ENCODE measurements at regions of chr1 and their contacts with region 1.

Region 1: GRCh38 chr1:180533266-180533987 is 25.3 kb upstream of the OVAAL start:
- DNase-seq: peak; percentile 59 to 80 (median 74)
- ATAC-seq: peak; percentile 86 to 94 (median 93)
- H3K4me3 ChIP-seq: no peak overlapping the region
- H3K27ac ChIP-seq: no peak overlapping the region
- H3K4me1 ChIP-seq: peaks cover 0 to 6% (median 5%) of the 10 kb centered on the region in 3 donors
- H3K27me3 ChIP-seq: no peaks in the 10 kb centered on the region
- CTCF ChIP-seq: peak; percentile 50 to 77 (median 63)

Region 2: GRCh38 chr1:180623579-180624347 is 90.3 kb after region 1 on chr1:
- intact Hi-C with region 1: loop called in 1 of 3 experiments (anchors 10 kb)
- DNase-seq: no peak
- ATAC-seq: peak in 2 of 4 donors; percentile 66 to 81
- H3K4me3 ChIP-seq: no peak overlapping the region
- H3K27ac ChIP-seq: no peak overlapping the region
- H3K4me1 ChIP-seq: no peaks in the 10 kb centered on the region
- H3K27me3 ChIP-seq: no peaks in the 10 kb centered on the region
- CTCF ChIP-seq: no peak

Region 3: GRCh38 chr1:180643693-180644092 is 110.3 kb after region 1 on chr1:
- intact Hi-C with region 1: loop called in 1 of 3 experiments (anchors 10 kb)
- DNase-seq: peak in 2 of 6 donors; percentile 18 to 23
- ATAC-seq: peak; percentile 40 to 74 (median 57)
- H3K4me3 ChIP-seq: no peak overlapping the region
- H3K27ac ChIP-seq: no peak overlapping the region
- H3K4me1 ChIP-seq: peaks cover 12 to 33% (median 26%) of the 10 kb centered on the region in 3 donors
- H3K27me3 ChIP-seq: no peaks in the 10 kb centered on the region
- CTCF ChIP-seq: no peak